Right ventricle myocardium inferior (tissue), 1 donor: ENCODE measurements at regions of chr1 and their contacts with region 1.

Region 1: DNA sequence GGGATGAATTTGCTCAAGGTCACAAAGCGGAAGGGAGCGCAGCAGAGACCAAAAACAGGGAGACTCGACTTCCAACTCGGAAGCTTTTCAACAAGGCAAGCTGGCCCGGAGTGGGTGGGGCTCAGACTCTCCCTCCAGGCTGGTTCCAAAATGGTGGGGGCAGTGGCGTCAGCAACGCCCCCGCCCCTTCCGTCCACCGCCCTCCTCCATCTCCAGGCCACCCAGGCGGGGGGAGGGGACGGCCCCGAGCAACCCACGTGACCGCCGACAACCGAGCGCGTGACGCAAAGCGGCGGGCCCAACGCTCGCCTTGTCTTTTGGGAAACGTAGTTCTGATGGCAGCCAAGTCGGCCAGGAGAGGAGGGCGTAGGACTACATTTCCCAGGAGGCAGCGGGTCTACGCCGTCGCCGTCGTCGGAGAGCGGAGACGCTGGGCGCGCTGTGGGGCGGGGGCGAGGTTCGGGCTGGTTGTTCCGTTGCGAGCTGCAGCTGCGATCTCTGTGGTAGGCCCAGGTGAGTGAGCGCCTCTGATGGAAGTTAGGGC is at the start of gene THRAP3:
- DNase-seq: peak; percentile 100
- ATAC-seq: peak; percentile 97
- total RNA-seq, gene THRAP3: 60.1 TPM

Region 2: DNA sequence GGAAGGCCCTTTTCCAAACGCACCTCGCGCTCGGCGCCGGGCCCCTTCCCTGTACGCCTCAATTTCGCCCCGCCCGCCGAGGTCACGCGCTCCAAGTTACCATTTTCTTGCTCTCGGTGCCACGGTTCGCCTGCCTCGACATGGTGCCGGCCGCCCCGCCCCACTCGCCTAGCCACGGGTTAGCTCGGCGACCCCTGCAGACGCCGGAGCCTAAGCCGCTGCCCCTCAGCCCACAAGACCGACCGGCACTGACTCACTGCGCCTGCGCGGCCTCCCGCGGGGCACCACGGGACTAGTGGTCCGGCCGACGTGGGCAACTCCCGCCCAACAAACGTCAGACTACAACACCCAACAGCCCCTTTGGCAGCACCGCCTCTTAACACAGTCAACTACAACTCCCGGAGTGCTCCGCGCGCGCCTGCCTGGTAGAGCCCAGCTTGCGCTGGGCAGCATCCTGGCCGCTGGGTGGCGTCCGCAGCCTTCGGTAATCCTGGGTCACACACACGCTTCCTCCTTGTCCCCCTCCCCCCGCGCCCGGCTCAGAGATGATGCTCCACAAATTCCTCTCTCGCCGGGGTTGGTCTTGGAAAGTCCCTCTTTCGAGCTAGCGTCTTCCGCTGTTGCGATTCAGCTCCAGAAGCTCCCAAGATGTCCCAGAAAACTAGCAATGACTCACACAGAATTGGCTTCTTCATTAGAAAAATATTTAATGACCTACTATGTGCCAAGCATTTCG is 74.7 kb before region 1 on chr1 and contains the start of gene TRAPPC3:
- intact Hi-C with region 1: loop called (anchors 1 kb)
- DNase-seq: peak; percentile 100
- ATAC-seq: peak; percentile 94
- total RNA-seq, gene TRAPPC3: 53.9 TPM